ENCODE measurements at regions of chr4 and their contacts with region 1.

Region 1: GRCh38 chr4:84852081-84852480 is 114.4 kb downstream of the WDFY3 start:
- DNase-seq: no peak
- ATAC-seq: no peak
- H3K4me3 ChIP-seq: no peak overlapping the region
- H3K27ac ChIP-seq: no peak overlapping the region
- H3K4me1 ChIP-seq: peaks cover 0 to 39% (median 12%) of the 10 kb centered on the region in 12 donors
- H3K27me3 ChIP-seq: no peaks in the 10 kb centered on the region
- CTCF ChIP-seq: no peak
- POLR2A ChIP-seq: no peak

Region 2: GRCh38 chr4:84767168-84767567 is 84.9 kb before region 1 on chr4:
- intact Hi-C with region 1: no loop called
- DNase-seq: no peak
- ATAC-seq: no peak
- H3K4me3 ChIP-seq: no peak overlapping the region
- H3K27ac ChIP-seq: no peak overlapping the region
- H3K4me1 ChIP-seq: no peaks in the 10 kb centered on the region
- H3K27me3 ChIP-seq: no peaks in the 10 kb centered on the region
- CTCF ChIP-seq: no peak
- POLR2A ChIP-seq: no peak

Region 3: DNA sequence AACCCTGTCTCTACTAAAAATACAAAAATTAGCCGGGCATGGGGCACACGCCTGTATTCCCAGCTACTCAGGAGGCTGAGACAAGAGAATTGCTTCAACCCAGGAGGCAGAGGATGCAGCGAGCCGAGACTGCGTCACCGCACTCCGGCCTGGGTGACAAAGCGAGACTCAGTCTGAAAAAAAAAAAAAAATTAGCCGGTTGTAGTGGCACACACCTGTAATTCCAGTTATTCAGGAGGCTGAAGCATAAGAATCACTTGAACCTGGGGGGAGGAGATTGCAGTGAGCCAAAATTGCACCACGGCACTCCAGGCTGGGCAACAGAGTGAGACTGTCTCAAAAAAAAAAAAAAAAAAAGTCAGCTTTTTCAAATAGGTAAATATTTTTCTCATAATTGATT is 42.5 kb after region 1 on chr4:
- intact Hi-C with region 1: loop called in 1 of 10 experiments (anchors 10 kb)
- DNase-seq: no peak
- ATAC-seq: no peak
- H3K4me3 ChIP-seq: no peak overlapping the region
- H3K27ac ChIP-seq: no peak overlapping the region
- H3K4me1 ChIP-seq: peaks cover 0 to 7% (median 0%) of the 10 kb centered on the region in 12 donors
- H3K27me3 ChIP-seq: no peaks in the 10 kb centered on the region
- CTCF ChIP-seq: no peak
- POLR2A ChIP-seq: no peak